Natural killer cell (primary cell): ENCODE measurements at regions of chr13 and their contacts with region 1.

Region 1: GRCh38 chr13:40682449-40683240 is 16.2 kb upstream of the FOXO1 start:
- DNase-seq: peak in 1 of 2 donors; percentile 48
- ATAC-seq: peak in 2 of 3 donors; percentile 38 to 52
- H3K4me3 ChIP-seq: no peak overlapping the region
- H3K4me3 Mint-ChIP-seq: no peak overlapping the region
- H3K27ac ChIP-seq: no peak overlapping the region
- H3K27ac Mint-ChIP-seq: no peak overlapping the region
- H3K4me1 ChIP-seq: no peaks in the 10 kb centered on the region
- H3K4me1 Mint-ChIP-seq: peaks cover 5 to 6% of the 10 kb centered on the region in 2 donors
- H3K27me3 ChIP-seq: no peaks in the 10 kb centered on the region
- H3K27me3 Mint-ChIP-seq: peaks cover 0 to 2% of the 10 kb centered on the region in 2 donors
- CTCF ChIP-seq: peak; percentile 83

Region 2: DNA sequence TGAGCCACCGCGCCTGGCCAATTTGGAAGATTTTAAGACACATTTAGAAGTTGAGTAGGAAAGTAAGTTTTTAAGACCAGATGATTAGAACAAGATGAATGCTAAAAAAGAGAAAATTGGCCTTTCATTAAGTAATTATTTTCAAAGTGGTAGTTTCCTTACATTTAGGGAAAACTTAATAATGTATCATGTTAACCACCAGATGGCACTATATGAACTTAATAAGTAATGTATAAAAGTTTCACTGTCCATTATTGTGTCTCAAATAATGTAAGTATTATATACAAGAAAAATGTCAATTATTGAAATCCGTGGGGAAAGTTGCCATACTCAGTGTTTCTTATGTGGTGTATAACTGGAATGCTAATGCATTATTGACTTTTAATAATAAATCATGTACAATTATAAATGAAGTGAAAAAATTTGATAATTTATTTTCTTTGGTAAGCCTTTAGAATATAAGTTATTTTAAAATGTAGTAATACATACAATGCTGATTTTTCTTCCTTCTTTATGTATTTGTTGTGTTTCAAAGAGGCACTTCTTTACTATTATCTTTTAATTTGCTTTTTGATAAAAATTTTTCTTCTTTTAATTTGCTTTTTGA is 998.0 kb before region 1 on chr13:
- intact Hi-C with region 1: loop called (anchors 2 kb)
- DNase-seq: peak in 1 of 2 donors; percentile 48
- ATAC-seq: peak in 1 of 3 donors; percentile 46
- H3K4me3 ChIP-seq: no peak overlapping the region
- H3K4me3 Mint-ChIP-seq: no peak overlapping the region
- H3K27ac ChIP-seq: no peak overlapping the region
- H3K27ac Mint-ChIP-seq: no peak overlapping the region
- H3K4me1 ChIP-seq: no peaks in the 10 kb centered on the region
- H3K4me1 Mint-ChIP-seq: peaks cover 14% of the 10 kb centered on the region in 2 donors
- H3K27me3 ChIP-seq: no peaks in the 10 kb centered on the region
- H3K27me3 Mint-ChIP-seq: no peaks in the 10 kb centered on the region
- CTCF ChIP-seq: peak; percentile 63

Region 3: GRCh38 chr13:39942552-39943273 is 739.9 kb before region 1 on chr13:
- intact Hi-C with region 1: loop called (anchors 2 kb)
- DNase-seq: peak; percentile 41 to 83
- ATAC-seq: peak; percentile 89 to 100 (median 99)
- H3K4me3 ChIP-seq: no peak overlapping the region
- H3K4me3 Mint-ChIP-seq: no peak overlapping the region
- H3K27ac ChIP-seq: no peak overlapping the region
- H3K27ac Mint-ChIP-seq: no peak overlapping the region
- H3K4me1 ChIP-seq: no peaks in the 10 kb centered on the region
- H3K4me1 Mint-ChIP-seq: peaks cover 0 to 6% of the 10 kb centered on the region in 2 donors
- H3K27me3 ChIP-seq: no peaks in the 10 kb centered on the region
- H3K27me3 Mint-ChIP-seq: peaks cover 9 to 19% of the 10 kb centered on the region in 2 donors
- CTCF ChIP-seq: peak; percentile 98

Region 4: GRCh38 chr13:40069173-40070044 is 613.2 kb before region 1 on chr13:
- intact Hi-C with region 1: loop called (anchors 1 kb)
- DNase-seq: peak; percentile 61 to 88
- ATAC-seq: peak; percentile 81 to 97 (median 91)
- H3K4me3 ChIP-seq: no peak overlapping the region
- H3K4me3 Mint-ChIP-seq: no peak overlapping the region
- H3K27ac ChIP-seq: no peak overlapping the region
- H3K27ac Mint-ChIP-seq: no peak overlapping the region
- H3K4me1 ChIP-seq: no peaks in the 10 kb centered on the region
- H3K4me1 Mint-ChIP-seq: no peaks in the 10 kb centered on the region
- H3K27me3 ChIP-seq: no peaks in the 10 kb centered on the region
- H3K27me3 Mint-ChIP-seq: peaks cover 0 to 11% of the 10 kb centered on the region in 2 donors
- CTCF ChIP-seq: peak; percentile 78

Region 5: DNA sequence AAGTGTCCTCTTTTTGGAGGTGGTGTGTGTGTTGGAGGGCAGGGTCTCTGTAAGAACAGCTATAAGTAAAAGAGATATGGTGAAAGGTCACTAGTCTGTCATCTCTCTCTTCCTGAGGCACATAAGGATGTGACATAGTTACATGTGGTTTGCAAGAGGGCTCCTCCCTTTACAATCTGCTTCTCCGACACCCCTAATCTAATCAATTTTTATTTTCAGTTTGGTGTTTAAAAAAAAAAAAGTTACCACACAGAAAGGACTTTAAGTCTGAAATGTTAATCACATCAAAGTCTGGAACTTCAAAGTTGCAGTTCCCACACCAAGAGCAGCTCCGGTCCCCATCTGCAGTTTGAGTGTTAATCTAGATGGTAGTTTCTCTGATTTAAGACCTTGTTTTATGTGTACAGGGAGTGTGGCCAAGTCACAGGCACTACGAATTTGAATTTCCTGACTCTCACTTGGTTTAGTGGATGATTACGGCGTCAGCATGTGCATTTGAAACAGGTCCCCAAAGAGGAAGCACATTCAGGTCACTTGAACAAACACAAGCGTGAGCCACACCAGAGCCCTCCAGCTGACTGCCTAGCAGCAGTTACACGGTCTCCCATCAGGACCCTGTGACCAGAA is 69.3 kb before region 1 on chr13:
- intact Hi-C with region 1: no loop called
- DNase-seq: peak; percentile 51 to 85
- ATAC-seq: peak; percentile 85 to 90 (median 87)
- H3K4me3 ChIP-seq: peak overlapping the region; percentile 23
- H3K4me3 Mint-ChIP-seq: peak overlapping the region; percentile 90
- H3K27ac ChIP-seq: peak overlapping the region; percentile 98
- H3K27ac Mint-ChIP-seq: peak overlapping the region; percentile 94 to 99
- H3K4me1 ChIP-seq: peaks cover 35% of the 10 kb centered on the region
- H3K4me1 Mint-ChIP-seq: peaks cover 31 to 46% of the 10 kb centered on the region in 2 donors
- H3K27me3 ChIP-seq: no peaks in the 10 kb centered on the region
- H3K27me3 Mint-ChIP-seq: no peaks in the 10 kb centered on the region
- CTCF ChIP-seq: no peak